Naive thymus-derived CD4-positive, alpha-beta T cell (primary cell): ENCODE measurements at regions of chr14 and their contacts with region 1.

Region 1: DNA sequence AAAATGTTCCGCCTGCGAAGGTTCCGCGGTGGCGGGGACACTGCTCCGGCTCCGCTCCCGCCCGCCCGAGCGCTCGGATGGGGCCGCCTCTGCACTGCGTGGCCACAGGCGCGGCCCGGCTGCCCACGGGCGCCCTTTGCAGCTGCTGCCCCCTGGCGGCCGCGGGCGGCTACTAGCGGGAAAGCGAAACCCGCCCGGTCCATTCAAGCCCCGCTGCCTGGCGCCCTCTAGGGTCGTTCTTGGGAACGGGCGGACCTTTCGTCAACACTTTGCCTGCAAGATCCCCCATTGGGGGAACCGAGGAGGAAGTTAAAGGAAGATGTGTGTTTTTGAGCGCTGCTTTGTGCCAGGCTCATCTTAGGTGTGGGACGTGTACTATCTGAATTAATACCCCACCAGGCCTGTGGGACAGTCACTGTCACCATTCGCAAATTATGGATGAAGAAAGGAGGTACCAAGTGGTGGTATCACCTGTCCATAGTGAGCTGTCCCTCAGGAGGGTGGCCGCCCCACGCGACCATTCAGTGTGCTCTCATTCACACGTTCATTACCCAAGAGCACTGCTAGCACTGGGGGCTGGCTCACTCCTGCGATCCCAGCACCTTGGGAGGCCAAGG is 19.4 kb downstream of the GPR132 start:
- DNase-seq: peak; percentile 83 to 96 (median 89)
- ATAC-seq: peak; percentile 98
- H3K4me3 ChIP-seq: no peak overlapping the region
- H3K4me3 Mint-ChIP-seq: peak overlapping the region in 7 of 10 donors; percentile 16 to 56 (median 44)
- H3K27ac ChIP-seq: peak overlapping the region; percentile 46
- H3K27ac Mint-ChIP-seq: peak overlapping the region; percentile 11 to 92 (median 87)
- H3K4me1 ChIP-seq: peaks cover 0 to 9% of the 10 kb centered on the region in 2 donors
- H3K4me1 Mint-ChIP-seq: peaks cover 5 to 14% (median 10%) of the 10 kb centered on the region in 7 donors
- H3K27me3 ChIP-seq: no peaks in the 10 kb centered on the region
- H3K27me3 Mint-ChIP-seq: peaks cover 0 to 7% (median 0%) of the 10 kb centered on the region in 5 donors

Region 2: DNA sequence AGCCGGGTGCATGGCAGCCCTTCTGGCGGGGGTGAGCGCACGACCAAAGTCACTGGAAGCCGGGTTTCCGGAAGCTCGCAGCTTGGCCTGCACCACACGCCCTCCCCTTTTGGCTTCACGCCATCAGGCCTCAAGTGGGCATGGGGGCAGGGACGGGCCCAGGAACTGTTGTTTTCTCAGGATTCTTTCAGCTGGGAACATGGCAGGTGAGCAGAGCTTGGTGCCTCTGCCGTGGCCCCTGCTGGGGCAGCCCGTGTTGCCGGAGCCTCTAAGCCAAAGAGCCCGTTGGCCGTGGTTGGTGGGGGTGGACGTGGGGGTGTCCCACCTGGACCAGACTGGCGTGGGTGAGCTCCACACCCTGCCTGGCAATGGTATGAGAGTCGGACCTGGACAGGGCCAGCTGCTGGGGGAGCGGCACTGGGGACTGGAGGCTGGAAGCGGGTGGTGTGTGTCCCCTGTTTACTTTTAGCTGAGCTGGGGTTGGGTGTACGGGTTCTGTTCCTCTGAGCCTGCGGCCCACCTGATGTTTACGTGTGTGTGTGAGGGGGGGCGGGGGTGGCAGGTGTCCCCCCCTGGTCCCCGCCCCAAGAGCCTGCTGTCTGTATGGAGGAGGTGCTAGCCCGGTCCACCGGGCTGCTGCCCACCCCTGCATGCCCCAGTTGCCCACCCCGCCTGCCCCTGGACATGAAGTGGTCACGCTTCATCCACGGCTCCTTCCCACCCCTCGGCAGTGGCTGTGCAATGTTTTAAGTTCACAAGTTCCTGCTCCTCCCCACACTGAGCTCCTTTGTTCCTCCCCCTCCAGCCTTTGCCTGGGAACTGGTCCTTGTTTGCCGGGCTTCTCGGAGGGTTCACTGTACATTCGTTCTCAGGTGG is 149.8 kb before region 1 on chr14:
- CTCF ChIA-PET with region 1: no interaction called
- POLR2A ChIA-PET with region 1: no interaction called
- intact Hi-C with region 1: loop called (anchors 1 to 2 kb)
- DNase-seq: peak in 1 of 9 donors; percentile 18
- ATAC-seq: no peak
- H3K4me3 ChIP-seq: no peak overlapping the region
- H3K4me3 Mint-ChIP-seq: no peak overlapping the region
- H3K27ac ChIP-seq: no peak overlapping the region
- H3K27ac Mint-ChIP-seq: no peak overlapping the region
- H3K4me1 ChIP-seq: no peaks in the 10 kb centered on the region
- H3K4me1 Mint-ChIP-seq: peaks cover 0 to 4% (median 0%) of the 10 kb centered on the region in 7 donors
- H3K27me3 ChIP-seq: no peaks in the 10 kb centered on the region
- H3K27me3 Mint-ChIP-seq: peaks cover 0 to 6% (median 0%) of the 10 kb centered on the region in 5 donors

Region 3: DNA sequence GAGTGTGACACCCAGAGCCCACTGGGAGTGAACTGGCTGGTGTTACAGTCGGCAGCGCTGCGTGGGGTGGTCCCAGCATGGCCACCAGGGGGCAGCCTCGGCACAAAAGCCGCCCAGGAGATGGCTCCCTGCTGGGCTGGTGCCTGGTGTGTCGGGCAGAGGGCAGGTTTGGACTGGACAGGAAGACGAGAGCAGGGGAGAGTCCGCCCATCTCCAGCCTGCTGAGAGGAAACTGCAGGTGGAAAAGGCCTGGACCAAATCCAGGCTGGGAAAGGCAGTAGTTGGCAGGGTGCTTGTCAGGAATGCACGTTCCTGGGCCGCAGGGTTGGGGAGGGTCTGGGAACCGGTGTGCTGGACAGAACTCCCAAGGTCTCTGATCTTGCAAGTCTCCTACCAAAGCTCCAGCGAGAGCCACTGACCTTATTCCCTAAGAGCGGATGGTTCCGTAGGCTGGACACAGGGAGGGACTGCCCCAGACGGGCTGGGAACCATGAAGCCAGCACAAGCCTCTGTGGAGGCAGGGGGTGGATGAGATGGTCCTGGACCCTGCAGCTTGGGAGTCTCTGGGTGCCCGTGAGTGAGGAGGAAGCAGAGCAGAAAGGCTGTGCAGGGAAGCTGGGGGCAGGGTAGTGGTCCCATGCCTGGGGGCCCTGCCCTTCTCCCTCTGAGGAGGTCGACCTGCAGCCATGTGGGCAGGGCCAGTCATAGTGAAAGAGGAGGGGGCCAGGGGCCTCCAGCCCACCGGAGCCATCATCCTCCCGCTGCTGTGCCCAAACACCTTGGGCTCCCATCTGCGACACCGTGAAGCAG is 69.4 kb before region 1 on chr14:
- CTCF ChIA-PET with region 1: interaction called, 54 read pairs
- POLR2A ChIA-PET with region 1: interaction called, 6 read pairs
- intact Hi-C with region 1: loop called (anchors 1 kb)
- DNase-seq: peak; percentile 67 to 91 (median 83)
- ATAC-seq: peak; percentile 86
- H3K4me3 ChIP-seq: no peak overlapping the region
- H3K4me3 Mint-ChIP-seq: peak overlapping the region; percentile 41 to 92 (median 72)
- H3K27ac ChIP-seq: no peak overlapping the region
- H3K27ac Mint-ChIP-seq: peak overlapping the region in 4 of 9 donors; percentile 3 to 68 (median 33)
- H3K4me1 ChIP-seq: peaks cover 0 to 7% of the 10 kb centered on the region in 2 donors
- H3K4me1 Mint-ChIP-seq: peaks cover 5 to 19% (median 13%) of the 10 kb centered on the region in 7 donors
- H3K27me3 ChIP-seq: peaks cover 0 to 8% of the 10 kb centered on the region in 2 donors
- H3K27me3 Mint-ChIP-seq: peaks cover 8 to 33% (median 16%) of the 10 kb centered on the region in 5 donors

Region 4: GRCh38 chr14:105059035-105059924 is 13.5 kb after region 1 on chr14:
- CTCF ChIA-PET with region 1: interaction called, 26 read pairs
- POLR2A ChIA-PET with region 1: interaction called, 10 read pairs
- intact Hi-C with region 1: loop called in 1 of 2 experiments (anchors 2 kb)
- DNase-seq: peak in 7 of 9 donors; percentile 74 to 91 (median 84)
- ATAC-seq: peak; percentile 67
- H3K4me3 ChIP-seq: peak overlapping the region; percentile 74
- H3K4me3 Mint-ChIP-seq: peak overlapping the region; percentile 59 to 96 (median 86)
- H3K27ac ChIP-seq: peak overlapping the region; percentile 96
- H3K27ac Mint-ChIP-seq: peak overlapping the region; percentile 91 to 99 (median 97)
- H3K4me1 ChIP-seq: peaks cover 44 to 58% of the 10 kb centered on the region in 2 donors
- H3K4me1 Mint-ChIP-seq: peaks cover 36 to 59% (median 52%) of the 10 kb centered on the region in 7 donors
- H3K27me3 ChIP-seq: no peaks in the 10 kb centered on the region
- H3K27me3 Mint-ChIP-seq: no peaks in the 10 kb centered on the region

Region 5: DNA sequence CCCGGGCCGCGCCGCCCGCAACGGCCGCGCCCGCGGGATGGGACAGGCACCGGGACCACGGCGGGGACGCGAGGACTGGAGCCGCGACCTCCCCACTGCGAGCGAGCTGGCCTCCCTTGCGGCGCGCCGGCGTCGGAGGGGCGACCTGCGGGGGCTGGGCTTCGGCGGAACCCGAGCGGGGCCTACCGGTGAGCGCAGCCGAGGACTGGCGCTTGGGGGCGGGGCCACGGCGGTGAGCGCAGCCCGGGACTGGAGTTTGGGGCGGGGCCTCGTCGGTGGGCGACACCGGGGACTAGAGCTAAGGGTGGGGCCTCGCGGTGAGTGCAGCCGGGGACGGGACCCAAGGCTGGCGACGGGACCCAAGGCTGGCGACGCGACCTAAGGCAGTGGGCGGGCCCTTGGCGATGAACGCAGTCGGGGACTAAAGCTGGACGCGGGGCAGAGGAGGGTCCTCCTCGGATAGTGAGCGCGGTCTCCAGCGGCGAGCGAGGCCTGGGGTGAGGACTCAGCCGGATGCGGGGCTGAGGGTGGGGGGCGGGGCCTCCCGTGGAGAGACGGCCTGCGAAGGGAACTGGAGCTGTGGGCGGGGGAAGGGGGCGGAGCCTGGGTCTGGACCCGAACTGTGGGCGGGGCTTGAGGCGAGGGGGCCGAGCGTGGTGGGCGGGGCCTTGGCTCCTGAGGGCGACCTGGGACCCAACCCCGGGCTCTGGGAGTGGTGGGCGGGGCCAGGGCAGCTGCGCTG is 255.1 kb after region 1 on chr14 and contains the start of gene BRF1:
- CTCF ChIA-PET with region 1: no interaction called
- POLR2A ChIA-PET with region 1: no interaction called
- intact Hi-C with region 1: no loop called
- DNase-seq: peak; percentile 94 to 100 (median 99)
- ATAC-seq: peak; percentile 93
- H3K4me3 ChIP-seq: peak within 1 kb of the TSS; percentile 73
- H3K4me3 Mint-ChIP-seq: peak within 1 kb of the TSS; percentile 75 to 95 (median 90)
- H3K27ac ChIP-seq: peak within 1 kb of the TSS; percentile 94
- H3K27ac Mint-ChIP-seq: peak within 1 kb of the TSS; percentile 86 to 97 (median 94)
- H3K4me1 ChIP-seq: peaks cover 0 to 22% of the 10 kb centered on the region in 2 donors
- H3K4me1 Mint-ChIP-seq: peaks cover 34 to 52% (median 40%) of the 10 kb centered on the region in 7 donors
- H3K27me3 ChIP-seq: no peaks in the 10 kb centered on the region
- H3K27me3 Mint-ChIP-seq: no peaks in the 10 kb centered on the region
- total RNA-seq, gene BRF1: 49.8 to 75.7 (median 61.4) TPM